Activated CD4-positive, alpha-beta memory T cell treated with anti-CD3 and anti-CD28 coated beads for 36 hours (primary cell): ENCODE measurements at regions of chr5 and their contacts with region 1.

Region 1: GRCh38 chr5:35129918-35130485 is 82.3 kb upstream of the AGXT2 start:
- DNase-seq: peak; percentile 77
- H3K4me3 Mint-ChIP-seq: no peak overlapping the region
- H3K27ac Mint-ChIP-seq: no peak overlapping the region
- H3K4me1 Mint-ChIP-seq: peaks cover 21% of the 10 kb centered on the region
- H3K27me3 Mint-ChIP-seq: peaks cover 52% of the 10 kb centered on the region

Region 2: DNA sequence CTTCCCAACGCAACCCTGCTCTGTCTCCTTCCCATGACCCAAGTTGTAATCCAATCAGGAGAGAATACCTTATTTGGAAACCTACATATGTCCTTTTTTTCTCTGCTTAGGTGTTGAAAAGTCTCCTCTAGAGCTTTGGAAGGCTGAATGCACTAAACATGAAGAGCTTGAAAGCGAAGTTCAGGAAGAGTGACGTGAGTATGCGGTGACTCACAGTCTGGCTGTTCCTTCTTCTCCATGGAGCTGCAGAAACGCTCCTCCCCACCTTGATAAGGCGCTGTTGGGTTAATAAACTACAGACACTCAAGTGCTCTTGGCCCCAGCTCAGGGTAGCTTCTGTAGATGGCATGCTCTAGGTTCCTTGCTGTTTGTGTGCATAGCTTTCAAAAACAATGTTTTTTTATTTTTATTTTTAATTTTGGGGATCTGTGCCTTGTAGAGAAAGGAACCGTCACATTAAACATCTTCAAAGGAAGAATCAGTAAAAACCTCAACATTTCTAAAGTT is 443.2 kb before region 1 on chr5:
- CTCF ChIA-PET with region 1: no interaction called
- POLR2A ChIA-PET with region 1: no interaction called
- intact Hi-C with region 1: no loop called
- DNase-seq: no peak
- H3K4me3 Mint-ChIP-seq: no peak overlapping the region
- H3K27ac Mint-ChIP-seq: no peak overlapping the region
- H3K4me1 Mint-ChIP-seq: peaks cover 10% of the 10 kb centered on the region
- H3K27me3 Mint-ChIP-seq: peaks cover 4% of the 10 kb centered on the region

Region 3: DNA sequence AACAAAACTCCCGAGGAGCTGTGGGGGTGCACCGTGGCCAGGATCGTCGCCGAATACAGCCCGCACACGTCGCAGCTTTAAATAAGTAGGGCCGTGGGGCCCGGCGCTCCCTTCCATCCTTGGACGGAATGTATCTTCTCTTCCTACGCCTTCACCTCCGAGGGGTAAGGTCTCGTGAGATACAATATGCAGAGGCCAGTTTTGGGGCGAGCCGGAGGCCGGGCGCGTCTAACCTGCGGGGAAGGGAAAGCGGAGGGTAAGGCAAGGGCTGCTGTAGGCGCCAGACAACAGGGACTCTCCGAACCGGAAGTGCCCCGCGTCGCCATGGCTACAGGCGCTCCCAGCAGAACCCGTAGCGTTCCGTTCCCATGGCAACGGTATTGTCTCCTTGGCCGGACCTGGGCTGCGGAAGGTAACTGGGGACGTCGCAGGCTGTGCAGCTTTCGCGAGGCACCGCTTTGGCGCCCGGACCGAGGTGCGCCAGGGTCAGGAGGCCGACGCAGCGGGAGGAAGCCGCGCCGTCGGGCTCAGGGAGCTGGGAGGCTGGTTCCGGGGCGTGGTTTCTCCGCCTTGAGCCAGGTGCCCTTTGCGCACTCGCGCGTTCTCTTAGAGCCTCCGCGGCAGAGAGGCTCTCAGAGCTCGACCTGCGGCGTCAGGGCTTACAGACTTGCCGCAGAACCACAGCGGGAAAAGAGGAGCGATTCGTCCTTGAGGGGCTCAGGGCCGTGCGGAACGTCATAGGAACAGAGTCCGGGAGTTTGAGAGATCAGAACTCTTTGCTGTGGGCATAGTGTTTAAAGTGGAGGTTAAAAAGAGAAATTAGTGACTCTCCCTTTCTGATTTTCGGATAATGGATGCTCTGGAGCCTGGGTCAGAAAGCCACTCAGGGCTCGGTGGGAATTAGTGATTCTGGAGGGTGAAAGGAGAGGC is 291.0 kb before region 1 on chr5 and contains the start of gene TTC23L:
- CTCF ChIA-PET with region 1: no interaction called
- POLR2A ChIA-PET with region 1: no interaction called
- intact Hi-C with region 1: loop called (anchors 2 kb)
- DNase-seq: peak; percentile 93
- H3K4me3 Mint-ChIP-seq: peak within 1 kb of the TSS; percentile 90
- H3K27ac Mint-ChIP-seq: peak within 1 kb of the TSS; percentile 68
- H3K4me1 Mint-ChIP-seq: peaks cover 9% of the 10 kb centered on the region
- H3K27me3 Mint-ChIP-seq: no peaks in the 10 kb centered on the region
- total RNA-seq, gene TTC23L: 0.07 TPM in 1 of 2 experiments, not detected in the other

Region 4: DNA sequence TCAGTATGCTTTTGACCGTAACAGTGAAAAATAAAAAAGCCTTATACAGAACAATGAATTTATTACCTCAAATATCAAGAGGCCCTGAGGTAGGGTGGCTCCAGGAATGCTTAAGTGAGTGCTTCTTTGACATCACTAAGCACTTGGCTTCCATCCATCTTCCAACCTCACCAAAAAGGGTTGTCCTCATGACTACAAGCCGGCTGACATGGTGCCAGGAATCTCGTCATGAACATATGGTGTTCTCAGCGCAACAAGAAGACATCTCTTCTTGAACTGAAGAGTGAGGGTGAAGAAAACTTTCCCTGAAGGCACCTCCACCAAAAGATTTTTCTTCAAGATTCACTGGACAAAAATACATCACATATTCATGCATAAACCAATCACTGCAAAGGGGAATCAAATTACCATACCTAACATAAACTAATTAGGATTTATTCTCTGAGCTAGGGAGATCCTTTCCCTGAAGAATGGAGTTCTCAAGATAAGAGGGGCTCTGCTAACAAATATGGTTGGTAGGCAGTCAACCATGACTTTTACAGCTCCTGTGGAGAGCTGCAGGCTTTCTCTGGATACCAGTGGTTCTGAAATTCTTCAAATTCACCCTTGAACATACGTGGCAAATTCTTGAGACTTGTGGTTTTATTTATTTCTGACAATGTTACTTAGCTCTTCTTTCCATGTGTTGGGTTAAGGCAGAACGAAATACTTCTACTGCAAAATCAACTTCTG is 131.8 kb before region 1 on chr5:
- CTCF ChIA-PET with region 1: no interaction called
- POLR2A ChIA-PET with region 1: no interaction called
- intact Hi-C with region 1: no loop called
- DNase-seq: no peak
- H3K4me3 Mint-ChIP-seq: no peak overlapping the region
- H3K27ac Mint-ChIP-seq: no peak overlapping the region
- H3K4me1 Mint-ChIP-seq: no peaks in the 10 kb centered on the region
- H3K27me3 Mint-ChIP-seq: peaks cover 13% of the 10 kb centered on the region

Region 5: GRCh38 chr5:35016174-35017051 is 113.6 kb before region 1 on chr5:
- CTCF ChIA-PET with region 1: no interaction called
- POLR2A ChIA-PET with region 1: no interaction called
- intact Hi-C with region 1: loop called (anchors 5 kb)
- DNase-seq: no peak
- H3K4me3 Mint-ChIP-seq: no peak overlapping the region
- H3K27ac Mint-ChIP-seq: no peak overlapping the region
- H3K4me1 Mint-ChIP-seq: no peaks in the 10 kb centered on the region
- H3K27me3 Mint-ChIP-seq: peaks cover 16% of the 10 kb centered on the region

Region 6: GRCh38 chr5:35058374-35058788 is 71.6 kb before region 1 on chr5:
- CTCF ChIA-PET with region 1: no interaction called
- POLR2A ChIA-PET with region 1: no interaction called
- intact Hi-C with region 1: loop called (anchors 1 kb)
- DNase-seq: no peak
- H3K4me3 Mint-ChIP-seq: no peak overlapping the region
- H3K27ac Mint-ChIP-seq: no peak overlapping the region
- H3K4me1 Mint-ChIP-seq: peaks cover 10% of the 10 kb centered on the region
- H3K27me3 Mint-ChIP-seq: peaks cover 28% of the 10 kb centered on the region

Region 7: GRCh38 chr5:35117967-35118366 is 12.0 kb before region 1 on chr5:
- CTCF ChIA-PET with region 1: no interaction called
- POLR2A ChIA-PET with region 1: no interaction called
- intact Hi-C with region 1: no loop called
- DNase-seq: peak; percentile 11
- H3K4me3 Mint-ChIP-seq: no peak overlapping the region
- H3K27ac Mint-ChIP-seq: no peak overlapping the region
- H3K4me1 Mint-ChIP-seq: peaks cover 3% of the 10 kb centered on the region
- H3K27me3 Mint-ChIP-seq: peaks cover 22% of the 10 kb centered on the region